B cell (primary cell): ENCODE measurements at regions of chr7 and their contacts with region 1.

Region 1: DNA sequence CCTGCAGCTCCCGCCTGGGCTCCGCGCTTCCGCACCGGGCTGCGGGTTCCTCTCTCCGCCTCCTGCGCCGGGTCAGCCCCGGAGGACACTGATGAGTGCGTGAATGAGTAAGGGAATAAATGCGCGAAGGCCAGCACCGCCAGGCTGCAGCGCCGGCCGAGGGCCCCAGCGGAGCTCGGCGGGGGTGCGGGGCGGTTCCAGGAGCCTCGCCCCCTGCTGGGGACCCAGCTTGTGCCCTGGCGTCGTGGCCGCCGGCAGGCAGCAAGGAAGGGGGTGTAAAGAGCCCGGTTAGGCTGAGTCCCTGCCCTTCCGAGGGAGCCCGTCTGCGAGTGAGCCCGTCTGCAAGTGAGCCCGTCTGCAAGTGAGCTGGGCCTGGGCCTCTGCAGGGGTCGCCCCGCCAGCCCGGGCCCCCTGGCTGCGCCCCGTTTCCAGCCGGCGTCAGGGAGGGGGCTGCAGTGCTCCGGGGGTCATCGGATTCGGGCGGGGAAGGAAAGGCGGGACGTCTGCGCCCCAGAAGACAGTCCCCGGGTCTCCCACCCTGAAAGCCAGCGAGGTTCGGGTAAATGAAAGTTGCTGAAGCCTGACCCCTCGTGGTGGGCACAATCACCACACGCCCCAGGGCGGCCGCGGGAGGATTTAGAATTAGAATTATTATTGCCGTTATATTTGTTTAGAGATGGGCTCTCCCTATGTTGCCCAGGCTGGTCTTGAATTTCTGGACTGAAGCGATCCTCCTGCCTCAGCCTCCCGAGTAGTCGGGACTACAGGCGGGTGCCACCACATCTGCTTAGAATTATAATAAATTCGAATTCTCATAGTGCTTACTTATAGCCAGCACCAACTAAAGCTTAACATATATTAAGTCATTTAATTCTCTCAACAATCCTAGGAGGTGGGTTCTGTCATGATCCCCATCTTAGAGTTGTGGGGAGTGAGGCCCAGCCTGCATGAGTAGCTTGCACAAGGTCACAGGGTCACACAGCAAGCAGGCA is 8.6 kb upstream of the CRYGN start:
- DNase-seq: peak; percentile 83
- ATAC-seq: peak; percentile 85
- H3K4me3 ChIP-seq: peak overlapping the region in 4 of 5 experiments; percentile 53 to 79 (median 60)
- H3K4me3 Mint-ChIP-seq: peak overlapping the region; percentile 87
- H3K27ac ChIP-seq: no peak overlapping the region
- H3K27ac Mint-ChIP-seq: no peak overlapping the region
- H3K4me1 ChIP-seq: peaks cover 0 to 8% of the 10 kb centered on the region in 2 donors
- H3K4me1 Mint-ChIP-seq: peaks cover 1% of the 10 kb centered on the region
- H3K27me3 ChIP-seq: peaks cover 0 to 8% (median 2%) of the 10 kb centered on the region in 4 experiments
- H3K27me3 Mint-ChIP-seq: peaks cover 38% of the 10 kb centered on the region
- CTCF ChIP-seq: peak; percentile 85

Region 2: DNA sequence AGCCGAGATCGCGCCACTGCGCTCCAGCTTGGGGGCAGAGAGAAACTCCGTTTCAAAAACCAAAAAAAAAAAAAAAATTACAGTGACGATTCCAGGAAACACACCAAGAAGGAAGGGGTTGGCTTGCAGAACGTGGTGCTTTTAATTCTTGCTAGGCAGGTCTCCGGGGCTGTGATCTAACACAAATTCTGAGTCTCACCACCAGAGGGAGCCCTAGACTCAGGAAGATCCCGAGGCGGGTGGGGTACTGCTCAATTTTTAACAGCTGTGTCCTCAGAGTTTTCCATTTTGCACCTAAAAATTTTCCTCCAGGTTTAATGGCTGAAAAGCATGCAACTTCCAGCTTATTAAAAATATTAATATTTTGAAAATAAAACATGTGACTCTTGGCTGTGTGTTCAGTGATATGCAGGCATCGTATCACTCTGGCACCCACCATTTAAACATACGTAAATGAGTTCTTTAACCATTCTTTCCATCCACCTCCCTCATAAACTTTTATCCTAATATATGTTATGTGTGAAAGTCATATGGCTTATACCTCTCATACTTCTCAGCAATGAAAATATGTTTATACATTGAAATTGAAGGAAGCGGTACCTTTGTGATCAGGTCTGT is 133.4 kb before region 1 on chr7:
- CTCF ChIA-PET with region 1: interaction called, 137 read pairs
- POLR2A ChIA-PET with region 1: no interaction called
- intact Hi-C with region 1: loop called (anchors 1 kb)
- DNase-seq: peak; percentile 85
- ATAC-seq: peak; percentile 86
- H3K4me3 ChIP-seq: no peak overlapping the region
- H3K4me3 Mint-ChIP-seq: no peak overlapping the region
- H3K27ac ChIP-seq: no peak overlapping the region
- H3K27ac Mint-ChIP-seq: no peak overlapping the region
- H3K4me1 ChIP-seq: peaks cover 0 to 3% of the 10 kb centered on the region in 2 donors
- H3K4me1 Mint-ChIP-seq: peaks cover 2% of the 10 kb centered on the region
- H3K27me3 ChIP-seq: peaks cover 0 to 4% (median 0%) of the 10 kb centered on the region in 4 experiments
- H3K27me3 Mint-ChIP-seq: no peaks in the 10 kb centered on the region
- CTCF ChIP-seq: peak; percentile 85

Region 3: GRCh38 chr7:151351027-151351426 is 97.5 kb before region 1 on chr7:
- CTCF ChIA-PET with region 1: interaction called, 75 read pairs
- POLR2A ChIA-PET with region 1: no interaction called
- intact Hi-C with region 1: no loop called
- DNase-seq: peak; percentile 47
- ATAC-seq: no peak
- H3K4me3 ChIP-seq: no peak overlapping the region
- H3K4me3 Mint-ChIP-seq: peak overlapping the region; percentile 56
- H3K27ac ChIP-seq: peak overlapping the region; percentile 82 to 99
- H3K27ac Mint-ChIP-seq: peak overlapping the region; percentile 76
- H3K4me1 ChIP-seq: peaks cover 36 to 41% of the 10 kb centered on the region in 2 donors
- H3K4me1 Mint-ChIP-seq: peaks cover 46% of the 10 kb centered on the region
- H3K27me3 ChIP-seq: no peaks in the 10 kb centered on the region
- H3K27me3 Mint-ChIP-seq: no peaks in the 10 kb centered on the region
- CTCF ChIP-seq: no peak

Region 4: DNA sequence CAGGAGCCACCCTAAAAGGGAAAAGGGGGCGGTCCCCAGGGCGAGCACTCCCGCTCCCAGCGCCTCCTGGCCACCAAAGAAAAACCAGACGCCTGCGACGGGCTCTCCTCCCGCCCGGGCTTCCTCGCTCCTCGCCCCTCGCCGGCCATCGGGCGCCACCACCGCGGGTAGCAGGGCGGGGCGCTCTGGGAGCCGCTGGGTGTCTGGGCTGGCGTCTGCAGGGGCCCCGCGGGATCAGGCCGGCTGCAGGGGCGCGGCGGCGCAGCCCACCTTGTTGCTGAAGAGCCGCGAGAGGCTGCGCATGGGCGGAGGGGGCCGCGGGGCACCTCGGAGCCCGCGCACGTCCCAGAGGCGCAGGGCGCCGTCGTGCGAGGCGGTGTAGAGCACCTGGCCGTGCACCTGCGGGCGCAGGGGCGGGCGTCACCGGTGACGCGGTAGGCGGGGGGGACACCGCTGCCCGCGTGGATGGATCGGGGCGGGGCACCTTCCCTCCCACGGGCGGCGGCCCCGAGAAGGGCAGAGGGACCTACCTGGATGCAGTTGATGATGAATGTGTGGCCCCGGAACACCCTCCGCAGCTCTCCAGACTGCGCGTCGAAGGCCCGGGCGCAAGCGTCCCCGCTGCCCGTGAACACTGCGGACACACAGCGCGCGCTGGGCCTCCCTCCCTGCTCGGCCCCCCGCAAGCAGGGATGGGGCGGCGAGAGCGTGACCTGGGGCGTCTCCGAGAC is 67.0 kb before region 1 on chr7:
- CTCF ChIA-PET with region 1: interaction called, 9 read pairs
- POLR2A ChIA-PET with region 1: no interaction called
- intact Hi-C with region 1: loop called (anchors 1 kb)
- DNase-seq: peak; percentile 91
- ATAC-seq: peak; percentile 71
- H3K4me3 ChIP-seq: peak overlapping the region; percentile 9 to 83 (median 53)
- H3K4me3 Mint-ChIP-seq: peak overlapping the region; percentile 87
- H3K27ac ChIP-seq: peak overlapping the region; percentile 80 to 82
- H3K27ac Mint-ChIP-seq: peak overlapping the region; percentile 92
- H3K4me1 ChIP-seq: peaks cover 18 to 23% of the 10 kb centered on the region in 2 donors
- H3K4me1 Mint-ChIP-seq: peaks cover 23% of the 10 kb centered on the region
- H3K27me3 ChIP-seq: peaks cover 0 to 12% (median 6%) of the 10 kb centered on the region in 4 experiments
- H3K27me3 Mint-ChIP-seq: peaks cover 10% of the 10 kb centered on the region
- CTCF ChIP-seq: no peak

Region 5: GRCh38 chr7:151436446-151437158 is 12.0 kb before region 1 on chr7:
- CTCF ChIA-PET with region 1: interaction called, 16 read pairs
- POLR2A ChIA-PET with region 1: no interaction called
- intact Hi-C with region 1: no loop called
- DNase-seq: no peak
- ATAC-seq: no peak
- H3K4me3 ChIP-seq: no peak overlapping the region
- H3K4me3 Mint-ChIP-seq: no peak overlapping the region
- H3K27ac ChIP-seq: no peak overlapping the region
- H3K27ac Mint-ChIP-seq: no peak overlapping the region
- H3K4me1 ChIP-seq: peaks cover 7 to 8% of the 10 kb centered on the region in 2 donors
- H3K4me1 Mint-ChIP-seq: peaks cover 7% of the 10 kb centered on the region
- H3K27me3 ChIP-seq: peaks cover 0 to 33% (median 11%) of the 10 kb centered on the region in 4 experiments
- H3K27me3 Mint-ChIP-seq: peaks cover 30% of the 10 kb centered on the region
- CTCF ChIP-seq: no peak

Region 6: DNA sequence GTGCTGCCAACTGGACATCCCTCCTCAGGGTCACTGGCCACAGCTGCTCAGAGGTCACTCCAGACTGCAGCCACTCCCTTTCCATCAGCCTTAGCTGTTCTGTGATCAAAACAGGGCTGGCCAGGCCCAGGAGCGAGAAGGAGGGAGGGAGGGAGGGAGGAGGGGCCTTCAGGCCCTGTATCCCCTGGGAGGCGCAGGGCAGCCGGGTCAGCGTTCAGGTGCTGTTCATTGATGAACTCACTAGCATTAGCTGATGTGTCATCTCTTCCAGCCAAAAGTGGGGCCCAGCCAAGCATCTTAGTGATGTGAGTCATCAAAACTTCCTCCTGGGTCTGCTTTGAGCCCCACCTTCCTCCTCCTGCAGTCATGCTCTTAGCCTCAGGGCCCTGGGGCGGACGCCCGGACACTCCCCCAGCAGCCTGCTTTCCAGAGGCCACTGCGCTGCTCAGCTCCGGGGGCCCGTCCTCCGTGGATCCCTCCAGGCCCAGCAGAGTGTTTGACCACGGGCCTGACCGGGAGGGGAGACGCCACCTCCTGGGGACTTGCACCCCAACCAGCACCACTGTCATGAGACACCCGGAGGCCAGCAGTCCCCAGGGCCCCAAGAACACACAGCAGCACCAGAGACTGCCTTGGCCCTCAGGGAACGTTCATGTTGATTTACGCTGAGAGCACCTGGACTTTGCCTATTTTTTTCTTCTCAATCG is 279.2 kb after region 1 on chr7:
- CTCF ChIA-PET with region 1: no interaction called
- POLR2A ChIA-PET with region 1: no interaction called
- intact Hi-C with region 1: no loop called
- DNase-seq: peak; percentile 20
- ATAC-seq: peak; percentile 82
- H3K4me3 ChIP-seq: no peak overlapping the region
- H3K4me3 Mint-ChIP-seq: no peak overlapping the region
- H3K27ac ChIP-seq: no peak overlapping the region
- H3K27ac Mint-ChIP-seq: peak overlapping the region; percentile 46
- H3K4me1 ChIP-seq: peaks cover 16 to 35% of the 10 kb centered on the region in 2 donors
- H3K4me1 Mint-ChIP-seq: peaks cover 34% of the 10 kb centered on the region
- H3K27me3 ChIP-seq: no peaks in the 10 kb centered on the region
- H3K27me3 Mint-ChIP-seq: no peaks in the 10 kb centered on the region
- CTCF ChIP-seq: no peak

Region 7: GRCh38 chr7:151759591-151760042 is 311.1 kb after region 1 on chr7:
- CTCF ChIA-PET with region 1: interaction called, 11 read pairs
- POLR2A ChIA-PET with region 1: no interaction called
- intact Hi-C with region 1: loop called (anchors 5 kb)
- DNase-seq: peak; percentile 69
- ATAC-seq: peak; percentile 70
- H3K4me3 ChIP-seq: no peak overlapping the region
- H3K4me3 Mint-ChIP-seq: no peak overlapping the region
- H3K27ac ChIP-seq: no peak overlapping the region
- H3K27ac Mint-ChIP-seq: peak overlapping the region; percentile 53
- H3K4me1 ChIP-seq: peaks cover 0 to 7% of the 10 kb centered on the region in 2 donors
- H3K4me1 Mint-ChIP-seq: peaks cover 16% of the 10 kb centered on the region
- H3K27me3 ChIP-seq: no peaks in the 10 kb centered on the region
- H3K27me3 Mint-ChIP-seq: no peaks in the 10 kb centered on the region
- CTCF ChIP-seq: peak; percentile 86